GM12878 (cell line): ENCODE measurements at regions of chr16 and their contacts with region 1.

Region 1: DNA sequence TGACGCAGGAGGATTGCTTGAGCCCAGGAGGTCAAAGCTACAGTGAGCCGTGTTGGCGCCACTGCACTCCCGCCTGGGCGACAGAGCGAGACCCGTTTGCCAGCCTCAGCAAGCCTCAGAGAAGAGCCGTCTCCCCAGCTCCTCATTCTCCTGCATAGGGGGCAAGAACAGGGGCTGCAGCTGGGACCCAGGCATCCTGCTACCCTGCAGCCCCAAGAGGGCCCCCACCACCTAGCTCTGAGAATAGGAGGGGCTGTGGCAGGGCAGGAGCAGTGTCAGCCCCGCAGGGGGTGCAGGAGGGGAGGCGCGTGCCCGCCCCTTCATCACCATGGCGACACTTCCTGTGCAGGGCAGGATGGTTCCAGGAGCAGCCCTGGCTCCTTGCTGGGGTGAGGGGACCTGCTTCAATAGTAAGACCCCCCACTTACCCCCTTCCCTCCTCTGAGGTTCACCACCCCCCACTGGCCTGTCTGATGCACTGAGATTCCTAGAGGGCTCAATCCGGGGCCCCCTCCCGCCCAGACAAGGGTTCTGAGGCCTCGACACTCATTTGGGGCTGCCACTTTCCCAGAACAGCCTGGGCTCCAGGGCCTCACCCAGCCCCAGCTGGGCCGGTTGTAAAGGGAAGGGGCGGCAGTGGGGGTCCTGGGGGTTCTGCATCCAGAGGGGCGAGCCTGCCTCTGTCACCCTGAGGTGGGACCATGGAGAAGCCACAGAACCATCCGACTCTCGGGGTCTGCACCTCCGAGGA is 20.2 kb downstream of the VASN start:
- DNase-seq: no peak
- ATAC-seq: no peak
- H3K4me3 ChIP-seq: no peak overlapping the region
- H3K27ac ChIP-seq: no peak overlapping the region
- H3K4me1 ChIP-seq: no peaks in the 10 kb centered on the region
- H3K27me3 ChIP-seq: no peaks in the 10 kb centered on the region
- CTCF ChIP-seq: no peak
- EP300 ChIP-seq: no peak
- POLR2A ChIP-seq: no peak
- RAD21 ChIP-seq: no peak

Region 2: DNA sequence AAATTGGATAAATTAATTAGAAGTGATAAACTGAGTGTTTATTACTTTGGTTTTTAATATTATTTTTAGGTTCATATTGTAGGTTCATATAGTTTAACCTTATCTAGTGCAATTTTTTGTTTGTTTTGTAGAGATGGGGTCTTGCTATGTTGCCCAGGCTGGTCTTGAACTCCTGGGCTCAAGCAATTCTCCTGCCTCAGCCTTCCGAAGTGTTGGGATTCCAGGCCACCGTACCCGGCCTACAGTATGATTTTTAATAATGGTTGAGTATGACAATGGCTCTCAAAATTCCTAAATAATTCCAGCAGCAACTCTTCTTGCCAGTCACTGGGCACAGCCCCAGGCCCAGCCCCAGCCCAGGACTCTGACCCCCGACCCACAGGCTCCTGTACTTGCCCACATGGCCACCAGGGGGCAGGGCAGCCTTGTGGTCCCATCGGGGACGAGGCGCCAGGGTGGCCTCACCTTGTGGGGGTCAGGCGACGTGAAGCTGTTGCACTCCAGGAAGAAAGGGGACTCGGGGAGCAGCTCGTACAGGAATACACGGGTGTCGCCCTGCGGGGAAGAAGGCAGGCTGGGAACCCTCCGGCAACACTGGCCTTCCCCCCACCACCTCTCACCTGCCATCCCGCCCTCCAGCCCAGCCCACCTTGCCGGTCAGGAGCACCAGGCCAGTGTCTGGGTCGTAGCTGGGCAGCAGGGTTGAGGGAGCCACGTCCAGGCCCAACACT is 32.8 kb before region 1 on chr16:
- CTCF ChIA-PET with region 1: no interaction called
- POLR2A ChIA-PET with region 1: no interaction called
- RAD21 ChIA-PET with region 1: no interaction called
- SMC1A ChIA-PET with region 1: no interaction called
- in situ Hi-C with region 1: loop called (anchors 5 kb)
- intact Hi-C with region 1: no loop called
- DNase-seq: no peak
- ATAC-seq: peak; percentile 91
- H3K4me3 ChIP-seq: no peak overlapping the region
- H3K27ac ChIP-seq: no peak overlapping the region
- H3K4me1 ChIP-seq: no peaks in the 10 kb centered on the region
- H3K27me3 ChIP-seq: no peaks in the 10 kb centered on the region
- CTCF ChIP-seq: peak; percentile 72 to 93 (median 76)
- EP300 ChIP-seq: no peak
- POLR2A ChIP-seq: no peak
- RAD21 ChIP-seq: peak; percentile 72